ENCODE measurements at regions of chr3 and their contacts with region 1.

Region 1: DNA sequence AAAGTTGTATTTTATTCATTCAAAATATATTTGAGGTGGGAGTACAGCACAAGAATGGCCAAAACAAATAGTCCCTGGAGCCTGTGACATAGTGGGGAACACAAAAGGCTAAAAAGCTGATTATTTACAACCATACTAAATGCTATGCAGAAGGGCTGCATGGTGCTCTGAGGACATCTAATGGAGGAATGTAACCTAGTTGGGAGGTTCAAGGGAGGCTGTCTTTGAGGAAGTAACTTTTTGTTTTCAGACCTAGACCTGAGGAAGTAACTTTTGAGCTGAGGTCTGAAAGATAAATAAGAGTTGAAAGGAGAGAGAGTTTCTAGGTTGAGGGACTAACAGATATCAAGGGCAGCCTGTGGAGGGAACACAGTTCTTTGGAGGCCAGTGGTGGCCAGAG is 34.8 kb upstream of the RASA2 start:
- DNase-seq: peak; percentile 55
- CTCF ChIP-seq: peak; percentile 73

Region 2: GRCh38 chr3:141311496-141312353 is 140.3 kb before region 1 on chr3:
- in situ Hi-C with region 1: loop called (anchors 10 kb)
- DNase-seq: peak; percentile 94
- CTCF ChIP-seq: peak; percentile 82

Region 3: DNA sequence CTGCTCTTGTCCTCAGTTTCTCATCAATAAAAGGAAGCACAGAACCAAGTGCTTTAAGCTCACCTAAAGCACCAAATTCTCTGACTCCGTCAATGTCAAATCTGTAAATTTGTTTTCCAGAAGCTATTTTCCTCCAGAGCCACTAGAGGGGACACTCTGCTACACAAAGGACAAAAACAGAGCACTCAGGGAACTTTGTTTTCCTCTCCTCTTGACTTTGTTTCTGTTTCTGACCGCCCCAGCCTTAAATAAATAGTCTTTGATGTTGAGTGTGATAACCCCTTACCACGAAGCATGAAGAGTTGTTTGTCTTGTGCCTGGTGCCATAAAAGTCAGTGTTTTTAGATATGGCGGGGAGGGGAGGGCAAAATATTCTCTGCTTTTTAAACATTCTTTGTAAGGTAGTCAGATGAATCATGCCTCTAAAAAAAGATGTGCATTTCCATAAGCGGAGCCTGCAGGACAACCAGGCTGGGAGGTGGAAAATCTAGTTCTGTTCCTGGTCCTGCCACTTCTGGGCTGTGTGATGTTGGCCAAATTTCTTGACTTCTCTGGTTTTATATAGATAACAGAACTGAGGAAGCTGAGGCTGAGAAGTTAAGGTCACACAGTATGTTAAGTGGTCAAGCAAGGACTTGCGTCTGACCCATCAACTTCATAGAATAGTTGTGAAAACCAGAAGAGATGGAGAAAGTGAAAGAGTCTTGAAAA is 91.0 kb before region 1 on chr3:
- in situ Hi-C with region 1: loop called (anchors 5 kb)
- DNase-seq: peak; percentile 65
- CTCF ChIP-seq: peak; percentile 68

Region 4: DNA sequence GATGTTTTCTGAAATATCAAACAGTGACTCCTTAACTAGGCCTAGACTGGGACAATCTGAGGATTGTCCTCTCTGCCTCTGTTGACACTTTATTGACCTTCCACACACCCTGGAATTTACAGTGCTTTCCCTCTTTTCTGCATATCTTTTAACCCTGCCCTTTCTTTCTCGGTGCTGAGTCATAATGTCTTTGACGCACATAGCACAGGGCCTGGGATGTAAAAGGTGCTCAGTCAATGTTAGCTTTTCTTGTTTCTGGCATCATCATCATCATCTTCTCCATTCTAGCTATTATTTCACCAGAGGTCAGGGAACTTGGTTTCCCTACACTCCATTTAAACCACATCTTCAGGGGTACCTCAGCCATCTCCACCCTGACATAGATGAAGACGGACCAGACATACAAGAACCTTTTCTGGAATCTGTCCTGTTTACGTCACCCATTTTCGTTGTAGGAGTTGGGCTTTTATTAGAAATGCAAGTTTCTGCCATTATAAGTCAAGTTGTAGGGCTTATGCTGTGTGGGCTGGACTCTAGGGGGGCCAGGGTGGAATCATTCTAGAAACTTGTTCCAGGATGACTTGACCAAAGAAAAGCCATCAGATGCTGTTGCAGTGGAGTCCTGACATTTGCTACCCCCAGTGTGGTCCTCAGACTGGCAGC is 37.1 kb before region 1 on chr3:
- in situ Hi-C with region 1: loop called (anchors 5 kb)
- DNase-seq: no peak
- CTCF ChIP-seq: no peak

Region 5: DNA sequence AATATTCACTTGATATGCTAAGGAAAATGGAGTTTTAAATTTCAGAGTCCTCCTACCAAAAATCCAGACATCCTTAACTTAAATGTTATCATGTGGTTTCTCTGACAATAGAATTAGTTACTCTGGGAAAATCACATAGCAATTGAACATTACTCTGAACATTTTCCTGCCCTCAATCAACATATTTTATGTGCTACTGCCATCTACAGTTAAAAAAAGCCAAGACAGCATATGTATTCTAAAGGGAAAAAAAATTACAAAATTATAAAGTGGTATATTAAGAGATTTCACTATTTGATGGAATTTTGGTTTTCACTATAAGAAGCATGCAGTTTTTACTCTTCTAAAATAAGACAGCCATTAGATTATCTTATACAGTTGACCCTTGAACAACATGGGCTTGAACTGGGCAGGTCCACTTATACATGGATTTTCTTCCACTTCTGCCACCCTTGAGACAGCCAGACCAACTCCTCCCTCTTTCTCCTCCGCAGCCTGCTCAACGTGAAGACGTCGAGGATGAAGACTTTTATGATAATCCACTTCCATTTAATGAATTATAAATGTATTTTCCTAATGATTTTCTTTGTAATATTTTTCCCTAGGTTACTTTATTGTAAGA is 546.7 kb after region 1 on chr3:
- in situ Hi-C with region 1: no loop called
- DNase-seq: no peak
- CTCF ChIP-seq: peak; percentile 34

Measured in GM13977 (cell line).